ENCODE measurements at regions of chr20 and their contacts with region 1.

Region 1: DNA sequence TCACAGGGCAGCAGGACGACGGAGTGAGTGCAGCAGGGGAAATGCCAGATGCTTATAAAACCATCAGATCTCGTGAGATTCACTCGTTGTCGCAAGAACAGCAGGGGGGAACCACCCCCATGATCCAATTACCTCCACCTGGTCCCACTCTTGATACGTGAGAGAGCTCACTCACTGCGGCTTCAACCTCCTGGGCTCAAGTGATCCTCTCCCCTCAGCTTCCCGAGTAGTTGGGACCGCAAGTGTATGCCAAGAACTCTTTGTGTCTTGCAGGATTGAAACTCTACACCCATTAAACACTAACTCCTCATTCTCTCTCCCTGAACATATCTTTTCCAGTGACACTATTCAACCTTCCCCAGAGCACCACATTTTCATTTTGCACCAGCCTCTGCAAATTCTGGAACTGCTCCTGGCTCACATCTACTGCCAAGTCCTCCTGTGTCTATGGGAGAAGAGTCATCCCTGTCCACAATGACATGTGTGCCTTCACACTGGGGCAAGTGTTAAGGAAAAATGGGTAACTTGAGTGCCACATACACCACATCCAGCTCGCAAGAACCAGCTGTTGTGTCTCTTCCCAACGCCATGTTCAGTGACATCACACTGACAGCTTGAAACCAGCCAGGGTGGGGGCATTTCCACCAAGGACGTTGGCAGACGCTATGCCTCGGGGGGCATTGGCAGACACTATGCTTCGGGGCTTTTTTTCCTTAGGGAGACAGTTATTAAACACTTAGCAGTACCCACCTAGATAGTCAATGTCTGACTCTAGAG is 14.8 kb upstream of the TAF4 start:
- DNase-seq: no peak
- H3K4me3 ChIP-seq: no peak overlapping the region
- H3K27ac ChIP-seq: no peak overlapping the region
- H3K4me1 ChIP-seq: no peaks in the 10 kb centered on the region
- H3K27me3 ChIP-seq: no peaks in the 10 kb centered on the region
- CTCF ChIP-seq: no peak
- POLR2A ChIP-seq: no peak

Region 2: DNA sequence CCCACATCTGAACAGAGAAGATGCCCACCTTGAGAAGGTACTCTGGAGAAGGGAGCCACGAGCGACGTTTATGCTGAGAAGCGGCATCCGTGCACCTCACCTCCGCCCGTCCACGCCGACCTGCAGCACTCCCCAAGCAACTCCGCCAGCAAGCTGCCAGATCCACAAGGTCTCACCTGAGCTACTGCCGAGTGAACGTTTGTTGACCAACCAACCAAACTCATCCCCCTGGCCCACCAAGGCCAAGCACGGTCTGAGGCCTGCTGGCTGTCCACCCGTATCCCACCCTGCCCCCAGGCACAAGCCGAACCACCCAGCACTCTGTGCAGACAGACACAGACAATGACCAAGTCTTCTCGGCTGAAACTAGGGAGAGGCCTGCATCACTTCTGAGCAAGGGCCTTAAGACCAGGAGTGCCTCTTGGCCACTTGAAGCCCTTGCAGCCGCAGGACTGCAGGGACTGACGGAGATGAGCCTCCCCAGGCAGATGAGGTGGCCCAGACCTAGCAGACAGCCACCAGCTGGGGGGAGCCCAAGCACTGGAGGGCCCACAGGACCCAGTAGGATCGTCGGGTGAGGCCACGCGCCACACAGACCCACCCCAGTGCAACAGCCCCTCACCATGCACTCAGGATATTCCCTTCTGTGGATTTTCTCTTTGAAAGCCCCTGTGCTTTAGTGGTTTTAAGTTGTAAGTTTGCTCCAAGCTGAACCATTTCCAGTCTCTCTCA is 26.8 kb before region 1 on chr20:
- intact Hi-C with region 1: loop called (anchors 2 kb)
- DNase-seq: no peak
- H3K4me3 ChIP-seq: no peak overlapping the region
- H3K27ac ChIP-seq: no peak overlapping the region
- H3K4me1 ChIP-seq: no peaks in the 10 kb centered on the region
- H3K27me3 ChIP-seq: no peaks in the 10 kb centered on the region
- CTCF ChIP-seq: no peak
- POLR2A ChIP-seq: no peak

Region 3: GRCh38 chr20:62065669-62066338 is 14.6 kb before region 1 on chr20 and contains the start of gene TAF4:
- intact Hi-C with region 1: no loop called
- DNase-seq: peak; percentile 68 to 72
- H3K4me3 ChIP-seq: peak within 1 kb of the TSS; percentile 63 to 79 (median 72)
- H3K27ac ChIP-seq: peak within 1 kb of the TSS; percentile 91 to 99
- H3K4me1 ChIP-seq: peaks cover 0 to 17% of the 10 kb centered on the region in 2 donors
- H3K27me3 ChIP-seq: no peaks in the 10 kb centered on the region
- CTCF ChIP-seq: no peak
- POLR2A ChIP-seq: no peak
- total RNA-seq, gene TAF4: 11.1 to 13.0 (median 12.7) TPM

Measured in breast epithelium (tissue), 4 donors.